A673 (cell line): ENCODE measurements at regions of chr11 and their contacts with region 1.

Region 1: DNA sequence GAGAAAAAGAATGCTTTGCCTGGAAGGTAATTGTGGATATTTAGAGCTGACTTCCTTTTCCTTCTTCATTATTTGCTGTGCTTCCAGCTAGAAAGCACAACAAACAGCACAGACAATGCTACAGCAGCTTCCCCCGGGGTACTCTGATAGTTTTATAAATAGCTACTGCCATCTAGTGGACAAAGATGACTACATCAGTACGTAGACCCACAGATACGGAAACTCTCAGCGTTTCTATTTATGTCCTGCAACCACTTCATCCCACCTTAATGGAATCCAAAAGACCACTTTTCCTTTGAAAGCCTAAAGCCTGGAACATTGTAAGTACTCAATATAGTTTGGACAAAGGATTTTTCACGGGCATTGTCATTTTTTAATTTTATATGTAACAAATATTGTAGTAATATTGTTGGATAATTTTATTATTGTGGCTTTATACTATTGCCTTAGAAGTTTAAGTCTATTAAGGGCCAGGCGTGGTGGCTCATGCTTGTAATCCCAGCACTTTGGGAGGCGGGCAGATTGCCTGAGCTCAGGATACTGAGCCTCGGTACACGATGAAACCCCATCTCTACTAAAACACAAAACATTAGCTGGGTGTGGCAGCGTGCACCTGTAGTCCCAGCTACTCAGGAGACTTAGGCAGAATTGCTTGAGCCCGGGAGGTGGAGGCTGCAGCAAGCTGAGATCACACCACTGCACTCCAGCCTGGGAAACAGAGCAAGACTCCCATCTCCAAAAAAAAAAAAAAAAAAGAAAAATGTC is 7.5 kb downstream of the HSPA8 start:
- DNase-seq: peak; percentile 94
- H3K4me3 ChIP-seq: no peak overlapping the region
- H3K27ac ChIP-seq: no peak overlapping the region
- H3K4me1 ChIP-seq: peaks cover 28% of the 10 kb centered on the region
- H3K27me3 ChIP-seq: no peaks in the 10 kb centered on the region
- CTCF ChIP-seq: peak; percentile 87

Region 2: GRCh38 chr11:122863704-122864326 is 190.7 kb before region 1 on chr11:
- CTCF ChIA-PET with region 1: interaction called, 16 read pairs
- POLR2A ChIA-PET with region 1: no interaction called
- intact Hi-C with region 1: no loop called
- DNase-seq: peak; percentile 71
- H3K4me3 ChIP-seq: no peak overlapping the region
- H3K27ac ChIP-seq: no peak overlapping the region
- H3K4me1 ChIP-seq: no peaks in the 10 kb centered on the region
- H3K27me3 ChIP-seq: no peaks in the 10 kb centered on the region
- CTCF ChIP-seq: peak; percentile 99

Region 3: DNA sequence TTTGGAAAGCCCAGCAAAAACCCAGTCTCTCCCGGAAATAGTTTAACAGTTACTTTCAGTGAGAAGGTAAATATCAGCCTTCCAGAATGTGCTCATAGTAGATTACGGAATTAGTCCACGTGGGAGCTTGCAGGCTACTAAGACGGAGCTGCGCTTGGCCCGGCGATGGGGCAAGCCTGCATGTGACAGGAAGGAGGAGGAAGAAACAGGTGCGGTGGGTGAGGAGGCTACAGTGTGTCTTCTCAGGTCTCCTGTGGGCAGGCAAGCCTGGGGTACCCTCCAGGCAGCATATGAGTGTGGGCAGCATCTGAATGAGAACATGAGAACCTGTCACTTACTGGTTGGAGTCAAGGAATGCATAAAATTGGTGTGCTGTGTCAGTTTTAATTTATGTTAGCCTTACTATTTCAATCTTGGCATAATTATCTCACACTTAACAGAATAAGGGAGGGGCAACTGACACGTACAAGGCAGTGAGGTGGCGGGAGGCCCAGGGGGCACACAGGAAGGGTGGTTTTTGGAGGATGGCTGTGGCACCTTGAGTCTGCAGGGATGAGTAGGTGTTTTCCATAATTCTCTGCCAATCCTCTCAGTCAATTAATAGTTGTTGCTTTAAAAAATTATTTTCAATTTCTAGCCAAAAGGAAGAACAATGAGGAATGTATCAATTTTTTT is 104.8 kb after region 1 on chr11:
- CTCF ChIA-PET with region 1: interaction called, 11 read pairs
- POLR2A ChIA-PET with region 1: no interaction called
- intact Hi-C with region 1: no loop called
- DNase-seq: peak; percentile 43
- H3K4me3 ChIP-seq: no peak overlapping the region
- H3K27ac ChIP-seq: peak overlapping the region; percentile 57
- H3K4me1 ChIP-seq: peaks cover 57% of the 10 kb centered on the region
- H3K27me3 ChIP-seq: no peaks in the 10 kb centered on the region
- CTCF ChIP-seq: no peak

Region 4: GRCh38 chr11:123253223-123253622 is 198.7 kb after region 1 on chr11:
- CTCF ChIA-PET with region 1: interaction called, 10 read pairs
- POLR2A ChIA-PET with region 1: no interaction called
- intact Hi-C with region 1: no loop called
- DNase-seq: no peak
- H3K4me3 ChIP-seq: no peak overlapping the region
- H3K27ac ChIP-seq: no peak overlapping the region
- H3K4me1 ChIP-seq: peaks cover 8% of the 10 kb centered on the region
- H3K27me3 ChIP-seq: no peaks in the 10 kb centered on the region
- CTCF ChIP-seq: no peak

Region 5: DNA sequence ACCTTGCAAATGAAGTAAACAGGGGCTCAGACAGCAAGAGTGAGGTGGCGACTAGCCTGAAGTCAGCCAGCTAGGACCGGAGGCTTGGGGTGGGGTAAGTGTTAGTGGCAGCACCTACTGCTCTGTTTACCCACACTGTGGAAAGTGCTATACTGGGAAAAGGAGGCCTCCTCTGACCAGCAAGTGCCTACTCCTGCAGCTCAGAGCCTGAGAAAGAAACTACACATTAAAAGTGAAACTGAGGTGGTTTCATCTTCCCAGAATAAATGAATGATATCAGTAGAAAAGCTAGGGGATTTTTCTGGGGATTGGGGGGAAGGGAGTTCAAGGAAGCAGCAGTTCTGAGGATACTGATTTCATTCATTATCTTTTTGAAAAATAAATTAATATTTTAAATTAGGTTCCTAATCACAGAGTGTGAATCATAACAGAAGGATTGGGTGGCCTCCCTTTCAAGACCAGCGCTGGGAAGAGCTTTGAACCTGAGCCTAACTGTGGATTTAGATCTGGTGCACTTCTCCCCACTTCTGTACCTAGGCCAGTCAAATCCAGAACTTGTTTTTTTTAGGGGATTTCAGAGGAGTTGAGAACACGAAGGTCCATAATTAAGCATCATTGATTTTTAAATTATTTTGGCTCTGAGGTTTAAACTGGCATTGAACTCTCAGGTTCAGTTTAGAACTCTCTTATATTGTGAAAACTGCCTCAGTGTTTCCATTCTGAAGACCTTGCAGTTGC is 327.5 kb after region 1 on chr11:
- CTCF ChIA-PET with region 1: no interaction called
- POLR2A ChIA-PET with region 1: no interaction called
- intact Hi-C with region 1: no loop called
- DNase-seq: no peak
- H3K4me3 ChIP-seq: no peak overlapping the region
- H3K27ac ChIP-seq: no peak overlapping the region
- H3K4me1 ChIP-seq: no peaks in the 10 kb centered on the region
- H3K27me3 ChIP-seq: no peaks in the 10 kb centered on the region
- CTCF ChIP-seq: no peak